Activated CD8-positive, alpha-beta T cell treated with anti-CD3 and anti-CD28 coated beads for 36 hours (primary cell): ENCODE measurements at regions of chr11 and their contacts with region 1.

Region 1: DNA sequence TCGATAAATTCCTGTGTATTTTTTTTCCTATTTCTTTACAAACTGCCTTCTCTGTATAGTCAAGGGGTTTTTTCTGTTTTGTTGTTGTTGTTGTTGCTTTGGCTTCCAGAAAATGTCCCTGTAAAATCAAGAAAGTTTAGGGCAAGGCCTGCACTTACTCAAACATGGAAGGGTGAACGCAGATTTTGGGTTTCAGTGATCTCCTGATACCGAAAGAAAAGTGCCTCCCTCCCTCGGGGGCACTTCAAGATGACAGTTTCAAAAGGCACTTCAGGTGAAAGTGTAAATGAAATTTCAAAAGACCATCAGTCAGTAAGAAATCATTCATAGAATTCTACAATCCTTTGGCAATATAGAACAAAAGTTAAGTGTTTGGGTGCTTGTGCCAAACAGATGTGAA is 43.4 kb upstream of the TMPRSS4 start:
- DNase-seq: no peak
- ATAC-seq: peak; percentile 49
- H3K4me3 Mint-ChIP-seq: no peak overlapping the region
- H3K27ac Mint-ChIP-seq: peak overlapping the region; percentile 74
- H3K4me1 Mint-ChIP-seq: peaks cover 33% of the 10 kb centered on the region
- H3K27me3 Mint-ChIP-seq: no peaks in the 10 kb centered on the region
- CTCF ChIP-seq: no peak

Region 2: GRCh38 chr11:118018390-118018789 is 15.1 kb before region 1 on chr11:
- CTCF ChIA-PET with region 1: interaction called, 23 read pairs
- POLR2A ChIA-PET with region 1: interaction called, 3 read pairs
- intact Hi-C with region 1: no loop called
- DNase-seq: no peak
- ATAC-seq: no peak
- H3K4me3 Mint-ChIP-seq: no peak overlapping the region
- H3K27ac Mint-ChIP-seq: no peak overlapping the region
- H3K4me1 Mint-ChIP-seq: peaks cover 42% of the 10 kb centered on the region
- H3K27me3 Mint-ChIP-seq: no peaks in the 10 kb centered on the region
- CTCF ChIP-seq: no peak